Naive thymus-derived CD4-positive, alpha-beta T cell (primary cell): ENCODE measurements at regions of chr4 and their contacts with region 1.

Region 1: GRCh38 chr4:111330786-111331185 is 707.9 kb upstream of the PITX2 start:
- DNase-seq: no peak
- ATAC-seq: no peak
- H3K4me3 ChIP-seq: no peak overlapping the region
- H3K4me3 Mint-ChIP-seq: no peak overlapping the region
- H3K27ac ChIP-seq: no peak overlapping the region
- H3K27ac Mint-ChIP-seq: no peak overlapping the region
- H3K4me1 ChIP-seq: no peaks in the 10 kb centered on the region
- H3K4me1 Mint-ChIP-seq: no peaks in the 10 kb centered on the region
- H3K27me3 ChIP-seq: no peaks in the 10 kb centered on the region
- H3K27me3 Mint-ChIP-seq: no peaks in the 10 kb centered on the region

Region 2: DNA sequence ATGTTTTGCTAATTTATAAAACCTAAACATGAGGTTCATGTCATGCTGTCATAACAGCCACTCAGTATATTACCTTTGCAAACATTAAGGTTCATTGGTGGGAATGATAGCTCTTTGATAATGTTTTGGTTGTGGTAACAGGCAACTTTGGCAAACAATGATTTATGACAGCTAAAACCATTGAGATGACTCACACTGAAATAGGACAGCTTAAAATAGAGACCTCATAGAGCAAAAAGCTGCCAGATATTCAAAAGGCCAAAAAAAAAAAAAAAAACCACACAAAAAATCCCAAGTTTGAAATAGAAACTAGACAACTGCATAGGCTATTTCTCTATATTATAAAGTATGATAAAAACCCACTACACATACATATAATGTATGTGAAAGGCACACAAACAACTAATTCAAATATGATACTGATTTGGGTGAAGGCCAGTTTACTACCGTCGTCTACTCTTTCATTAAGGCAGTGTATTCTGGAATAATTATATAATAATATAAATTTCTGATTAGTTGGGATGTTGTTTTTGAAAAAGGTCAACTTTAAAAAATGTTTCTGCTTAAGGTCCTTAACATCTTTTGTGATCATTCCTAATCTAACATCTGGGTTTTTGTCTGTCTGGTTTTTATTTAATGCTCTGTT is 61.9 kb before region 1 on chr4:
- CTCF ChIA-PET with region 1: no interaction called
- POLR2A ChIA-PET with region 1: no interaction called
- intact Hi-C with region 1: no loop called
- DNase-seq: no peak
- ATAC-seq: no peak
- H3K4me3 ChIP-seq: no peak overlapping the region
- H3K4me3 Mint-ChIP-seq: no peak overlapping the region
- H3K27ac ChIP-seq: no peak overlapping the region
- H3K27ac Mint-ChIP-seq: no peak overlapping the region
- H3K4me1 ChIP-seq: no peaks in the 10 kb centered on the region
- H3K4me1 Mint-ChIP-seq: peaks cover 0 to 2% (median 0%) of the 10 kb centered on the region in 7 donors
- H3K27me3 ChIP-seq: no peaks in the 10 kb centered on the region
- H3K27me3 Mint-ChIP-seq: no peaks in the 10 kb centered on the region

Region 3: DNA sequence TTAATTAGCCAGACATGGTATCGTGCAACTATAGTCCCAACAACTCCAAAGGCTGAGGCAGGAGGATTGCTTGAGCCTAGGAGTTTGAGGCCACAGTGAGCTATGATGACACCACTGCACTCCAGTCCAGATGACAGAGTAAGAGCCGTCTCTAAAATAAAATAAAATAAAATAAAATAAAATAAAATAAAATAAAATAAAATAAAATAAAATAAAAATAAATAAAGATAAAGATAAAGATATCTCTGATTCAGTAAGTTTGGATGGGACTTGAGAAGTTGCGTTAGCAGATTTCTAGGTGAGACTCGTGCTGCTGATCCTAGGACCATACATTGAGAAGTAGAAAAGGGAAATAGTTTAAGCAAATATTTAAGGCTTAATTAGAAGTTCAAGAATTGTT is 559.6 kb after region 1 on chr4:
- CTCF ChIA-PET with region 1: no interaction called
- POLR2A ChIA-PET with region 1: no interaction called
- intact Hi-C with region 1: loop called (anchors 10 kb)
- DNase-seq: no peak
- ATAC-seq: no peak
- H3K4me3 ChIP-seq: no peak overlapping the region
- H3K4me3 Mint-ChIP-seq: no peak overlapping the region
- H3K27ac ChIP-seq: no peak overlapping the region
- H3K27ac Mint-ChIP-seq: no peak overlapping the region
- H3K4me1 ChIP-seq: no peaks in the 10 kb centered on the region
- H3K4me1 Mint-ChIP-seq: no peaks in the 10 kb centered on the region
- H3K27me3 ChIP-seq: no peaks in the 10 kb centered on the region
- H3K27me3 Mint-ChIP-seq: peaks cover 0 to 4% (median 0%) of the 10 kb centered on the region in 5 donors